ENCODE measurements at regions of chr3 and their contacts with region 1.

Region 1: GRCh38 chr3:125154800-125155269 is 57.7 kb downstream of the SLC12A8 start:
- DNase-seq: no peak
- H3K4me3 ChIP-seq: no peak overlapping the region
- H3K27ac ChIP-seq: no peak overlapping the region
- H3K27me3 ChIP-seq: no peaks in the 10 kb centered on the region
- CTCF ChIP-seq: no peak

Region 2: DNA sequence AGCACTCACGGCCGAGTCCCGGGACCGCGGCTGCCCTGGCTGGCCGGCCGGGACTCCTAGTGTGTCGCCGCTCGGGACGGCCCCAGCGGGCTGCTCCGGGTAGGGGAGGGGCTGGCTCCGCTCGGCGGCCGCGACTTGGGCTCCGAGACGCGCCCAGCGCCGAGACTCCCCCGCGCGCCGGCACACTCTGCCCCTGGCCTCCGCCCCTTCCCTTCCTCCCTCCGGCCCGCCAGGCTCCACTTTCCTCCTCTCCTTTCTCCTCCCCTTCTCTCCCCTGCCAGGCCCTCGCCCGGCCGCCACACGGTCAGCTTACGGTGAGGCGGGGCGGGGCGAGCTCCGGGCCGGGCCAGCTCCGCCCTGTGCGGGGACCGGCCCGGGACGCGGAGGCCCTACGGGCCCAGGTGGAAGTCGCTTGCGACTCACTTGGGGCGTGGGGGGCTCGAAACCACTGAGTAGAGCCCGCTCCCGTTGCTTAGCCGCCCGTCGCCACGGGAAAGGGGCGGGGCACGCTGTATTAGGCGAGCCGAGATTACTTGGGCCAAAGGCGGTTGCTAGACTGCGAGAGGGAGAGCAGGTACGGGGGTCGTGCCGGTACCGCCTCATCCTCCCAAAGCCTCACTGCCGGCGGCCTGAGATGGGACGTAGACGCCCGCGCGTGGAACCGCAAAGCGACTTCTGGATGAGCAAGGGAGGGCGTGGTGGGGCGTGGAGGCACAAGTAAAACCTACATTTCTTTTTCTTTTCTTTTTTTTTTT is 267.5 kb before region 1 on chr3 and contains the start of gene ITGB5:
- intact Hi-C with region 1: no loop called
- DNase-seq: peak in 7 of 10 donors; percentile 23 to 56 (median 45)
- H3K4me3 ChIP-seq: peak within 1 kb of the TSS; percentile 46 to 81 (median 72)
- H3K27ac ChIP-seq: peak within 1 kb of the TSS in 56 of 59 donors; percentile 8 to 89 (median 75)
- H3K27me3 ChIP-seq: peaks cover 0 to 8% (median 0%) of the 10 kb centered on the region in 45 donors
- CTCF ChIP-seq: no peak
- total RNA-seq, gene ITGB5: 16.4 to 107 (median 32.0) TPM

Region 3: DNA sequence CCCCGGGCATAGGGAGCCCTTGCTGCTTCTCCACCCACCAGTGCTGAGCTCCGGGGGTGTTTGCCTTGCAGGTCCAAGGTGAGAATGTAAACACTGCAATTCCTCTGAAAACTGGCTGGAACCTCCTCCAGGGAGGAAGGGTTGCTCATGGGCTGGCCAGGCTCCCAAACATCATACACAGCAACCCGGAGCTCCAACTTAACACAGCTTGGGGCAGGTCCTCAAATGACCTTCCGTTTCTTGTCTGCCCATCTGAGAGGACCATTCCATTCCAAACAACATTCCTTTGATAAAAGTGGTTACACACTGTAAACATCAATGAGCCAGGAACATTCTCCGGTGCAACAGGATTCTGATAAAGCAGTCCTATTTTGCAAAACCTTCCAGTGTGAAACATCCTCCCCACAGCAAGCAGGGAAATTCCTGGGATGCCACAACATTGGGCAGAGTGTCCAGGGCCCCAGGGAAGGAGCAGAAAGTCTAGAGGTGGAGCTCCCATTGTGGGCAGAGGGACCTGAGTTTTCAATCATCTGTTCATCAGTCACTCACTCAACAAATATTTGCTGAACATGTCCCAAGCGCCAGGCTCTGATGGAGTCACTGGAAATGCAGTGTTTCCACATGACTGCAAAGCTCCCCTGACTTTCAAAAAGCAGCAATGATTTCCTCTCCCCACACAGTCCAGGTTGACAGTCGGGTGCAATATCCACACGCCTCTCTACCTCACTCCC is 91.8 kb before region 1 on chr3:
- intact Hi-C with region 1: loop called in 1 of 2 experiments (anchors 5 kb)
- DNase-seq: no peak
- H3K4me3 ChIP-seq: no peak overlapping the region
- H3K27ac ChIP-seq: no peak overlapping the region
- H3K27me3 ChIP-seq: no peaks in the 10 kb centered on the region
- CTCF ChIP-seq: no peak

Measured in dorsolateral prefrontal cortex (tissue), 120 donors.